ENCODE measurements at regions of chr3 and their contacts with region 1.

Region 1: GRCh38 chr3:55556619-55557537 is 69.8 kb upstream of the WNT5A start:
- DNase-seq: no peak
- H3K4me3 ChIP-seq: no peak overlapping the region
- H3K27ac ChIP-seq: no peak overlapping the region
- H3K4me1 ChIP-seq: peaks cover 4% of the 10 kb centered on the region
- H3K27me3 ChIP-seq: no peaks in the 10 kb centered on the region
- CTCF ChIP-seq: no peak
- EP300 ChIP-seq: no peak
- POLR2A ChIP-seq: no peak

Region 2: GRCh38 chr3:54717506-54717905 is 839.4 kb before region 1 on chr3:
- intact Hi-C with region 1: no loop called
- DNase-seq: no peak
- H3K4me3 ChIP-seq: no peak overlapping the region
- H3K27ac ChIP-seq: no peak overlapping the region
- H3K4me1 ChIP-seq: no peaks in the 10 kb centered on the region
- H3K27me3 ChIP-seq: no peaks in the 10 kb centered on the region
- CTCF ChIP-seq: no peak
- EP300 ChIP-seq: no peak
- POLR2A ChIP-seq: no peak

Region 3: DNA sequence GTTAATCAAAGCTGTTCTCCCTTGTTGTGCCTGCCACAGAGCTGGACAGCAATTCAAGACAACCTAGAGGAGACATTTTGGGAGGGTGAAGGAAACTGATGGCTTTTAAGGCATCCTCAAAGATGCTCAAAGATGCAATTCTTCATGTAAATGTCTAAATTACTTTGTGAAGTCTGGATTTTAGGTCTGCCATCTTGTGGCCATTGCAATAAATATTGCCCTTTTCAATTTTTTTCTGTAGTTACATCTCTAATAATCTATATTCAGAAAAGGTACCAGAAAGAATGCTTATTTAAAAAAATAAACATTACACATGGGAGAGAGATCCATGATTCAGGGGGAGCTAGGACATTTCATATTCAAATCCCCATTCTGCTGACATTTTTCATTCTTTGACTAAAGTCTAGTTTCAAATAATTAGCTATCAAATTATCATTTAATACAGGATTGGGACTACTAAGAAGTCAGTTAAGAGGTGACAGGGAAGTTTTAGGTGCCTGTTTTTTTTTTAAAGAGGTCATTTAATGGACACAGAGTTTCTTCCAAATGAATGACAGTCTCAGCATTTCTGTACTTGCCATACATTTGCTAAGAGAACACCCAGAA is 190.0 kb after region 1 on chr3:
- intact Hi-C with region 1: loop called in 1 of 4 experiments (anchors 10 kb)
- DNase-seq: no peak
- H3K4me3 ChIP-seq: no peak overlapping the region
- H3K27ac ChIP-seq: no peak overlapping the region
- H3K4me1 ChIP-seq: no peaks in the 10 kb centered on the region
- H3K27me3 ChIP-seq: no peaks in the 10 kb centered on the region
- CTCF ChIP-seq: peak in 2 of 3 donors; percentile 31 to 37
- EP300 ChIP-seq: no peak
- POLR2A ChIP-seq: no peak

Region 4: GRCh38 chr3:56753206-56753820 is 1196.4 kb after region 1 on chr3:
- intact Hi-C with region 1: no loop called
- DNase-seq: no peak
- H3K4me3 ChIP-seq: no peak overlapping the region
- H3K27ac ChIP-seq: no peak overlapping the region
- H3K4me1 ChIP-seq: peaks cover 13% of the 10 kb centered on the region
- H3K27me3 ChIP-seq: no peaks in the 10 kb centered on the region
- CTCF ChIP-seq: no peak
- EP300 ChIP-seq: no peak
- POLR2A ChIP-seq: no peak

Measured in ovary (tissue), 10 donors.